ENCODE measurements at regions of chr1 and their contacts with region 1.

Region 1: GRCh38 chr1:78607334-78607927 is 12.8 kb upstream of the IFI44L start:
- DNase-seq: peak; percentile 1 to 13
- ATAC-seq: no peak
- H3K4me3 ChIP-seq: no peak overlapping the region
- H3K27ac ChIP-seq: no peak overlapping the region
- H3K4me1 ChIP-seq: no peaks in the 10 kb centered on the region
- CTCF ChIP-seq: peak; percentile 55
- EP300 ChIP-seq: no peak
- POLR2A ChIP-seq: no peak
- RAD21 ChIP-seq: peak; percentile 61 to 65

Region 2: GRCh38 chr1:78132174-78132947 is 475.1 kb before region 1 on chr1:
- CTCF ChIA-PET with region 1: interaction called, 11 read pairs
- POLR2A ChIA-PET with region 1: no interaction called
- DNase-seq: no peak
- ATAC-seq: peak in 1 of 2 experiments; percentile 19; a peak in 1 of 6 replicates
- H3K4me3 ChIP-seq: no peak overlapping the region
- H3K27ac ChIP-seq: no peak overlapping the region
- H3K4me1 ChIP-seq: no peaks in the 10 kb centered on the region
- CTCF ChIP-seq: no peak
- EP300 ChIP-seq: no peak
- POLR2A ChIP-seq: no peak
- RAD21 ChIP-seq: no peak

Region 3: GRCh38 chr1:78145105-78145580 is 462.3 kb before region 1 on chr1:
- CTCF ChIA-PET with region 1: interaction called, 24 read pairs
- POLR2A ChIA-PET with region 1: no interaction called
- DNase-seq: peak; percentile 21 to 60
- ATAC-seq: peak; percentile 76 to 88; a peak in 5 of 6 replicates
- H3K4me3 ChIP-seq: no peak overlapping the region
- H3K27ac ChIP-seq: no peak overlapping the region
- H3K4me1 ChIP-seq: peaks cover 4% of the 10 kb centered on the region; the same call in 1 of the 3 replicates
- CTCF ChIP-seq: peak; percentile 69
- EP300 ChIP-seq: no peak
- POLR2A ChIP-seq: no peak
- RAD21 ChIP-seq: peak; percentile 69 to 80

Region 4: GRCh38 chr1:78410643-78411042 is 196.8 kb before region 1 on chr1:
- CTCF ChIA-PET with region 1: no interaction called
- POLR2A ChIA-PET with region 1: no interaction called
- DNase-seq: no peak
- ATAC-seq: no peak
- H3K4me3 ChIP-seq: no peak overlapping the region
- H3K27ac ChIP-seq: no peak overlapping the region
- H3K4me1 ChIP-seq: no peaks in the 10 kb centered on the region
- CTCF ChIP-seq: no peak
- EP300 ChIP-seq: no peak
- POLR2A ChIP-seq: no peak
- RAD21 ChIP-seq: no peak

Region 5: GRCh38 chr1:78536427-78536826 is 71.0 kb before region 1 on chr1:
- CTCF ChIA-PET with region 1: no interaction called
- POLR2A ChIA-PET with region 1: no interaction called
- DNase-seq: no peak
- ATAC-seq: no peak
- H3K4me3 ChIP-seq: no peak overlapping the region
- H3K27ac ChIP-seq: no peak overlapping the region
- H3K4me1 ChIP-seq: no peaks in the 10 kb centered on the region
- CTCF ChIP-seq: no peak
- EP300 ChIP-seq: no peak
- POLR2A ChIP-seq: no peak
- RAD21 ChIP-seq: no peak

Region 6: DNA sequence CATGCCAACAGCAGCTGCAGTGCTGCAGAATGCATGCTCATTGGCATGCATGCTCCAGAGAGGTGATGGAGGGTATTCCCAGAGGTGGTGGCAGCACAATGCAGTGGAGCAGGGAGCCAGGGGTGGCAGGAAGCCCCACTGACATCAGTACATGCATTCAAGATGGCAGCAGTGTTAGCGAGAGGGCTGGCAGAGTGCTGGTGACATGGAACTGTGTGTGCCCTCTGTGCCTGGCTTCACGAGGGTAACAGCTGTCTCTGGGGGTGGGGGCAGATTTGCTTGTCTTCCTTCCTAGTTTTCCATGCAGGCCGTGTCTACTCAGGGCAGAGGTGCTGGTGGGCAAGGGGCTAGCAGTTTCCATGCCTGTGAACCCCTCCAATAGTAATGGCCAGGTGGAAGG is 94.1 kb after region 1 on chr1:
- CTCF ChIA-PET with region 1: no interaction called
- POLR2A ChIA-PET with region 1: no interaction called
- DNase-seq: no peak
- ATAC-seq: no peak
- H3K4me3 ChIP-seq: no peak overlapping the region
- H3K27ac ChIP-seq: no peak overlapping the region
- H3K4me1 ChIP-seq: no peaks in the 10 kb centered on the region
- CTCF ChIP-seq: no peak
- EP300 ChIP-seq: no peak
- POLR2A ChIP-seq: no peak
- RAD21 ChIP-seq: no peak